Breast epithelium (tissue), 4 donors: ENCODE measurements at regions of chr6 and their contacts with region 1.

Region 1: DNA sequence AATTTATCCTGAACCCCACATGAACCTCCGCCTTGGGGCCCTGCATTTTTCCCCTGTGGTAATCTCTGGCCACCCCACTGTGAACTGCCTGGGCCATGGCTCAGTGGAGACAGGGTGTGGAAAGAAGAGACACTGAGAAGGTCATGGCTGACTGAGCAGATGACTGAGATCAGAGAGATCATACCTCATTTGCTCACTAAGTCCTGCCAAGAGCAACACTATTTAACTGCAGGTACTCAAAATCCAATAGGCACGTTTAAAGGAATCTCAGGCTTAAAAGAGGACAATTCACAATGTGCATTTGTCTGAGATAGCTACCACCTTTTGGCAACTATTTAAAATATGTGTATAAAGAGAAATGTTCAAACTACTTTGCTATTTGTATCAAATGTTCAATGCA is 305.0 kb downstream of the GMDS start:
- DNase-seq: no peak
- H3K4me3 ChIP-seq: no peak overlapping the region
- H3K27ac ChIP-seq: no peak overlapping the region
- H3K4me1 ChIP-seq: no peaks in the 10 kb centered on the region
- H3K27me3 ChIP-seq: no peaks in the 10 kb centered on the region
- CTCF ChIP-seq: no peak
- POLR2A ChIP-seq: no peak

Region 2: GRCh38 chr6:978937-979685 is 961.3 kb before region 1 on chr6:
- intact Hi-C with region 1: no loop called
- DNase-seq: no peak
- H3K4me3 ChIP-seq: no peak overlapping the region
- H3K27ac ChIP-seq: no peak overlapping the region
- H3K4me1 ChIP-seq: no peaks in the 10 kb centered on the region
- H3K27me3 ChIP-seq: no peaks in the 10 kb centered on the region
- CTCF ChIP-seq: no peak
- POLR2A ChIP-seq: no peak

Region 3: DNA sequence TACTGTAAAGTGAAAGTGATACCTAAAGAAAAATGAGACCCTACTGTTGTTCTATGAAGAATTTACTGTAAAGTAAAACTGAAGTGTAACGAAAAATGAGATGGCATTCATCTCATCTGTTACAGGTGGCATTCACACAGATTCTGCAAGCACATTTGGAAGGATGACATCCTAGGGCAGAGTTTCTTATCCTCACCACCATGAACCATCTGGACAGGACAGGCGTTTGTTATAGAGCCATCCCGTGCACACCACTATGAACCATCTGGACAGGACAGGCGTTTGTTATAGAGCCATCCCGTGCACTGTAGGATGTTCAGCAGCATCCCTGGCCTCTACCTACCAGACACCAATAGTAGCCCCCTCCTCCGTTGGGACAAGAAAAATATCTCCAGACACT is 10.2 kb after region 1 on chr6:
- intact Hi-C with region 1: loop called (anchors 2 kb)
- DNase-seq: no peak
- H3K4me3 ChIP-seq: no peak overlapping the region
- H3K27ac ChIP-seq: no peak overlapping the region
- H3K4me1 ChIP-seq: no peaks in the 10 kb centered on the region
- H3K27me3 ChIP-seq: no peaks in the 10 kb centered on the region
- CTCF ChIP-seq: no peak
- POLR2A ChIP-seq: no peak

Region 4: DNA sequence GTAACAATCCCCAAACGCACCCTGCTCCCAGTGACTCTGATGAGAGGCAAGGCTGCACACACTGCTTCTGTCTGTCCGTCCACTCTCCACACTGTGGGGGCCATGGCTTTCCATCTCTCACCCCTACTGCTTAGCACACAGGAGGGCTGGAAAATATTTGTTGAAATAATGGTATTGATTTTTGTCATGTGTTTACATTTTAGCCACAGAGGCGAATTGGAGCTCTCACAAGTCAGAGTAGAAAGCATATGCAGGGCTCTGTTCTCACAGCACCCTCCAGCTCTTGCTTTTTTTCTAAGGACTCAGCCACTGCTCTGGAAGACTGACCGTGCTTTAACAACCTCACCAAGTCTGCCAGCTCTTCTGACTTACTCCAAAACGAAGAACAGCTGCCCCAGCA is 31.2 kb after region 1 on chr6:
- intact Hi-C with region 1: no loop called
- DNase-seq: no peak
- H3K4me3 ChIP-seq: no peak overlapping the region
- H3K27ac ChIP-seq: no peak overlapping the region
- H3K4me1 ChIP-seq: no peaks in the 10 kb centered on the region
- H3K27me3 ChIP-seq: no peaks in the 10 kb centered on the region
- CTCF ChIP-seq: no peak
- POLR2A ChIP-seq: no peak